ENCODE measurements at regions of chr17 and their contacts with region 1.

Region 1: DNA sequence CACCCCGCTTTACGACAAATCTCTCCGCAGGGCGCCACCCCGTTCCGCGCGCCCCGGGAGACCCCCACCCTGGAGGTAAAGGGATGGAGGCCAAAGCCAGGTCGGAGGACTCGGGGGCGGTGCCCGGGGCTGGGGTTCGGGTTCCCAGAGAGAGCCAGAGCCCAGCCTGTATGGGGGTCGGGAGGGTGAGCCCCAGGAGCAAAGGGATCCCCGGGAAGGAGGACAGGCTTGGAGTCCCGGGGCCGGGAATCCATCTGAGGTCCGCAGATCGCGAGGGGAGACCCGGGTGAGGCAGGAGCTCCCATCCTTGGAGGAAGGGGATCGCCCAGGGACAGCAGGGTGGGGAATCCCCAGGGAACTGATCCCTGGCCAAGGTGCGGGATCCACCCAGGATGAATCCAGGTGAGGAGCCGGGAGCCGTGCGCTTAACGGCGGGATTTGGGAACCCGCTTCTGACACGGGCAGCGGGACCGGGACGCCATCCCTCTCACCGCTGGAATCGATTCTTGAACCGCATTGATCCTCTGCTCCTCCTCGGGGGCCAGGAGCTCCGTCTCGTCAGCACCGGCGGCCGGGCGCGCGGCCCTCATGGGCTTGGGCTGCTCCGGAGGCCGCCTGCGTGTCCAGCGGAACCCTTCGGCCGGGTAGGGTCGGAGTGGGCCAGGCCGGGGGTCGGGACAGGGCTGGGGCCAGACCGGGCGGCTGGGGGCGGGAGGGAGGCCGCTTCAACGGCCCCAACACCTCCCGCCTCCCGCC is at the start of gene MMD:
- DNase-seq: peak in 1 of 2 donors; percentile 64
- H3K4me3 ChIP-seq: peak within 1 kb of the TSS; percentile 98 to 100
- H3K27ac ChIP-seq: peak within 1 kb of the TSS; percentile 71 to 73
- H3K4me1 ChIP-seq: no peaks in the 10 kb centered on the region
- H3K27me3 ChIP-seq: no peaks in the 10 kb centered on the region
- CTCF ChIP-seq: no peak
- total RNA-seq, gene MMD: 22.9 TPM

Region 2: GRCh38 chr17:54900457-54901229 is 520.7 kb before region 1 on chr17 and contains the start of gene TOM1L1:
- intact Hi-C with region 1: loop called (anchors 2 kb)
- DNase-seq: peak; percentile 14 to 81
- H3K4me3 ChIP-seq: peak within 1 kb of the TSS; percentile 68 to 69
- H3K27ac ChIP-seq: peak within 1 kb of the TSS in 1 of 2 donors; percentile 41
- H3K4me1 ChIP-seq: no peaks in the 10 kb centered on the region
- H3K27me3 ChIP-seq: no peaks in the 10 kb centered on the region
- CTCF ChIP-seq: peak in 1 of 3 experiments; percentile 6
- total RNA-seq, gene TOM1L1: 31.0 TPM

Region 3: DNA sequence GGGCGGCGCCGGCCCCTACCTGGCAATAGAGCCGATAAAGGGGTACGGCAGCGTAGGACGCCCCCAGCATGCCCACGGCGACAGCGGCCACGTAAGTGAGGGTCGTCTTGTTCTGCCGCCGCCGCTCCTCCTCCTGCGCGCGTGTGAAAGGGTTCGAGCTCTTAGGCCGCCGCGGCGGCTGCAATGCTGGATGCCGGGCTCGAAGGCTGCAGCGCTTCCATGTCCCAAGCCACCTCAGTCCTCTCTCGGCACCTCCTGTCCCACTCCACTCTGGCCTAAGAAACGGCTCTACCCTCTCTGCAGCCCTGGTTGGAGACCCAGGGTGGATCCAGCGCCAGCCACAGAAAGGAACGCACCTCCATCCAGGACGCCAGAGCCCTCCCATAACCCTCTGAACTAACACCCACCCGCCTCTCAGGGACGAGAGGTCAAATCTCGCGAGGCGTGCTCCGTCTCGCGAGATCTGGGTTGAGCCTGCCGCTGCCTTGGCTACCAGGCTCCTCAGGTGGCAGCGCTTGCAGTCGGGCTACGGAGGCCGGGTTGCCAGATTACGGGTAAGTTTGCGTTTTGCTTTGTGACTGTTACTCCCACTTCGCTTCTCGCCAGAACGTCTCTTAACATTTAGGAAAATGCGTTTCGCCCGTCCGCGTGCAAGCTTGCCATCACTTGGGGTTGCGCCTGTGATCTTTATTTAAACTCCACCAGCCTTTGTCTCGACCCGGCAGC is 452.9 kb before region 1 on chr17 and contains the starts of genes COX11 and STXBP4:
- intact Hi-C with region 1: loop called (anchors 1 kb)
- DNase-seq: peak; percentile 90 to 98
- H3K4me3 ChIP-seq: peak within 1 kb of the TSS; percentile 75 to 95
- H3K27ac ChIP-seq: peak within 1 kb of the TSS; percentile 82 to 90
- H3K4me1 ChIP-seq: peaks cover 4 to 11% of the 10 kb centered on the region in 2 donors
- H3K27me3 ChIP-seq: no peaks in the 10 kb centered on the region
- CTCF ChIP-seq: peak in 1 of 3 experiments; percentile 51
- total RNA-seq, gene COX11: 19.6 TPM
- total RNA-seq, gene STXBP4: 4.9 TPM

Region 4: DNA sequence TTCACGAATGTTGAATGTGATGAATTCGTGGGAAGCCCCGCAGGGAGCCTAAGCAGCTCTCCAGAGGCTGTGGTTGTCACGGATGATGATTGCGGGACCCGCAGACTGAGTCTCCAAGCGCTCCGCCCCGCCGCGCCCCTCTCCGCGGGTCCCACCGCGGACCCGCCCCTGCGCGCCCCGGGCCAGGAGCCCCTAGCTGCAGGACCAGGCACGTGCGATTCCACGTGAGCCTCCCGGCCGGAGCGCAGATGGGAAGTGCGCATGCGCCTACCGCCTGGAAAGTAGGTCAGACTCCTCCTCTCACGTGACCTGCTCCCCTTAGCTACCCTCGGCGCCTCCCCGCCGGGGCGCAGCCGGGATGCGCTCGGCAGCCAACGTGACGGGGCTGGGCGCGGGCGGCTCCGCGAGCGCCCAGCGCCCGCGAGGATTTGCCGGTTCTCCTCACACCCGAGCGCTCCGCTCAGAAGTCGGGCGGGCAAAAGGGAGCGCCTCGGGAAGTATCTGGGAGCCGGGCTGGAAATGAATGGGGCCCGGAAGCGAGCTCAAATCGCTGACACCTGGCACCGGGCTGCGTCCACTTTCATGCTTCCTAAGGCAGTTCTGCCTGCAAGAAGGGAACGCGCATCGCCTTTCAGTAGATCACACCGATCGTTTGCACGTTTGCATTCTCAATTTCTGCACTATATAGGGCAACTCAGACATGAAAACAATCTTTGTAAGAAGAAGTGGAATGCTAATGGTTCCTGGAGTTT is 183.0 kb before region 1 on chr17:
- intact Hi-C with region 1: loop called (anchors 5 kb)
- DNase-seq: peak; percentile 66 to 95
- H3K4me3 ChIP-seq: peak overlapping the region; percentile 55 to 65
- H3K27ac ChIP-seq: peak overlapping the region; percentile 33 to 47
- H3K4me1 ChIP-seq: peaks cover 5 to 10% of the 10 kb centered on the region in 2 donors
- H3K27me3 ChIP-seq: no peaks in the 10 kb centered on the region
- CTCF ChIP-seq: no peak

Region 5: DNA sequence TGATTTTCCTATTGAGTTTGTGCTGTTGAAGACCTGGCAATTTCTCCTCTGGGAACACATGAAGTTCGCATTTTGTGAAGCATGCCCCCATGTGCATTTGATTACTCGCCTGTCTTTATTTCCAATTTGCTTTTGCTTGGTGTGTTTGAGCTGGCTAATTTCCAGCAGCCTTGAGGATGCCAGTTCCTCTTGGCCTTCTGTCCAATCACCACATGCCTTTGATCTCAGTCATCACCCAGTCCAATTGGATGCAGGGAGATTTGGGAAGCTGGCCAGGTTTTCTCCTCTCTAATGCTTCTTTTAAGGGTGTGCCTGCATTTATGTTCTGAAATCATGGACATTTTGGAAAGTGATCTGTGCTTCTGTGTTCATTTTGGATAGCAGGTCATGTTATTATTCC is 305.1 kb after region 1 on chr17:
- intact Hi-C with region 1: loop called (anchors 5 kb)
- DNase-seq: peak in 1 of 2 donors; percentile 85
- H3K4me3 ChIP-seq: no peak overlapping the region
- H3K27ac ChIP-seq: peak overlapping the region in 1 of 2 donors; percentile 48
- H3K4me1 ChIP-seq: peaks cover 0 to 14% of the 10 kb centered on the region in 2 donors
- H3K27me3 ChIP-seq: no peaks in the 10 kb centered on the region
- CTCF ChIP-seq: no peak

Region 6: GRCh38 chr17:55750750-55751657 is 329.6 kb after region 1 on chr17 and contains the start of gene PCTP:
- intact Hi-C with region 1: loop called (anchors 5 kb)
- DNase-seq: peak; percentile 83 to 98
- H3K4me3 ChIP-seq: peak within 1 kb of the TSS; percentile 88 to 94
- H3K27ac ChIP-seq: peak within 1 kb of the TSS; percentile 78 to 80
- H3K4me1 ChIP-seq: peaks cover 0 to 6% of the 10 kb centered on the region in 2 donors
- H3K27me3 ChIP-seq: no peaks in the 10 kb centered on the region
- CTCF ChIP-seq: peak in 2 of 3 experiments; percentile 35 to 39
- total RNA-seq, gene PCTP: 17.8 TPM

Measured in ascending aorta (tissue), 2 donors.